IMR-90 (cell line): ENCODE measurements at regions of chr18 and their contacts with region 1.

Region 1: GRCh38 chr18:69935319-69936190 is 12.1 kb downstream of the CD226 start:
- DNase-seq: no peak
- ATAC-seq: no peak
- H3K4me3 ChIP-seq: no peak overlapping the region
- H3K27ac ChIP-seq: no peak overlapping the region
- H3K4me1 ChIP-seq: no peaks in the 10 kb centered on the region
- H3K27me3 ChIP-seq: no peaks in the 10 kb centered on the region
- CTCF ChIP-seq: no peak
- POLR2A ChIP-seq: no peak
- RAD21 ChIP-seq: no peak

Region 2: DNA sequence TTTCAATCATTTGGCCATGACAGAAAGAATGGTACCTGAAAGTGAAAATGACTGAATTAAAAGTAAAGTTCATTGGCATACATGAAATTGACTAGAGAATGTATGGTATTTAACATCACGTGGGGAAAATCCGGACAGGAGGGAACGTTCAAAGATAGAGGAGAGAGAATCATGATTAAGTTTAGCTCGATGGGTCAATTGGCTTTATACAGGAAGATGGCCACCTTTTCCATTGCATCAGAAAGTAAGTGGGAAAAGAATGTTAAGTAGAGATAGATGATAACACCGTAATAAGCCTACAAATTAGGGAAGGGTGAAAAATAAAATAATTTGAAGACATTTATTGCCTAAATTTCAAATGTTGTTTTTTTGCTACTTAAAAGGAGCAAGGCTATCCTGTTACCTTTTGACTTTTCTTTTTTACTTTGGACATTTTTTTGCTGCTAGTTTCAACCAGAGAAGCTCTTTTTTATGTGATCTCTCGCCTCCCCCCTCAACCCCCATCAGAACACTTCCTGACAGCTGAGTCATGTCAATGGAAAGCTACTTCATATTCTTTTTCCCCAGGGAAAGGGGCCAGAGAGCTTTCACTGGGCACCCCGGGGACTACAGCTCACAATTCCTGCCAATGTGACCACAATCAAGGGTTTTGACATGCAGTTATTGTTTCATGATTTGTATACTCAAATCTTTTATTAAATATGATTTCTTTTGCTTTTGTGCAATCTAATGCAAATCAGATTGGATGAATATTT is 1138.4 kb before region 1 on chr18:
- CTCF ChIA-PET with region 1: no interaction called
- POLR2A ChIA-PET with region 1: no interaction called
- dilution Hi-C with region 1: no loop called
- in situ Hi-C with region 1: no loop called
- intact Hi-C with region 1: no loop called
- DNase-seq: peak; percentile 83
- ATAC-seq: peak; percentile 33; the same call in 1 of the 2 replicates
- H3K4me3 ChIP-seq: no peak overlapping the region
- H3K27ac ChIP-seq: peak overlapping the region; percentile 67; the same call in 1 of the 2 replicates
- H3K4me1 ChIP-seq: peaks cover 2% of the 10 kb centered on the region; the same call in 1 of the 2 replicates
- H3K27me3 ChIP-seq: no peaks in the 10 kb centered on the region
- CTCF ChIP-seq: no peak
- POLR2A ChIP-seq: no peak
- RAD21 ChIP-seq: no peak

Region 3: GRCh38 chr18:69612242-69612641 is 323.3 kb before region 1 on chr18:
- CTCF ChIA-PET with region 1: no interaction called
- POLR2A ChIA-PET with region 1: no interaction called
- dilution Hi-C with region 1: no loop called
- in situ Hi-C with region 1: no loop called
- intact Hi-C with region 1: no loop called
- DNase-seq: no peak
- ATAC-seq: no peak
- H3K4me3 ChIP-seq: no peak overlapping the region
- H3K27ac ChIP-seq: no peak overlapping the region
- H3K4me1 ChIP-seq: no peaks in the 10 kb centered on the region
- H3K27me3 ChIP-seq: no peaks in the 10 kb centered on the region
- CTCF ChIP-seq: no peak
- POLR2A ChIP-seq: no peak
- RAD21 ChIP-seq: no peak

Region 4: DNA sequence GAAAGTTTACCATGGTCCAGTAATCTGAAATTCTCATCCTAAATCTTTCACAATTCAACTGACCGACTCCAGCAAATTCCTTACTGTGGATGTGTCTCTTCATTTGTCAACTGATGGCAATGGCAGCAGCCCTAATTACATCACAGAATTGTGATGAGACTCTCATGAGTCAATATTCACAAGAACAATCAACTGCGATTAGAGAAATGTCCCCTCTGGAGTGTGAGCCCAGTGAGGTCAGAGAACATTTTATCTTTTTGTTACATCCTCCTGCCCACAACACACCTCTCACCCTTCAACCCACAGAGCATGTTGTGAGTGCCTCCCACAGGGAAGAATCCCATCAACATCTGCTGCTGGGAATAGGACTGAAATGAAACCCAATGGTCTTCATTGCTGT is 61.5 kb before region 1 on chr18:
- CTCF ChIA-PET with region 1: no interaction called
- POLR2A ChIA-PET with region 1: no interaction called
- dilution Hi-C with region 1: no loop called
- in situ Hi-C with region 1: no loop called
- intact Hi-C with region 1: loop called (anchors 10 kb)
- DNase-seq: peak; percentile 65
- ATAC-seq: peak; percentile 54
- H3K4me3 ChIP-seq: no peak overlapping the region
- H3K27ac ChIP-seq: no peak overlapping the region
- H3K4me1 ChIP-seq: peaks cover 3% of the 10 kb centered on the region
- H3K27me3 ChIP-seq: no peaks in the 10 kb centered on the region
- CTCF ChIP-seq: no peak
- POLR2A ChIP-seq: no peak
- RAD21 ChIP-seq: no peak

Region 5: DNA sequence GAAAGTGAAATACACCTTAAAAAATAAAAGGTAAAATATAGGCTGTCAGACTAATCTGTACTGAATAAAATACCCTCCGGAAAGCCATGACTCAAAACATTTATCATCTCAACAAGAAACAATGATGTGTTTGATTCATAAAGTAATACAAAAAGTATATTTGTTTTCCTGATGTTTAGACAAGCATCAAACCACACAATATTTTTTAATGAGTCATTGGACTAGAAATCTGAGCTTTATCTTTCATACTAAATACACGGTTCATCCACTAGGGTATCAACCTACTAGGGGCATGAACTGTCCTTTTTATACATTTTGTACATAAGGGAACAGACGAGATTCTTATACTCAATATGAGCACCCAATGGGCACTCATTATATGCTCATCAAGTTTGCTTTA is 19.1 kb before region 1 on chr18:
- CTCF ChIA-PET with region 1: no interaction called
- POLR2A ChIA-PET with region 1: no interaction called
- dilution Hi-C with region 1: no loop called
- in situ Hi-C with region 1: no loop called
- intact Hi-C with region 1: no loop called
- DNase-seq: peak; percentile 26
- ATAC-seq: peak; percentile 61; the same call in 1 of the 2 replicates
- H3K4me3 ChIP-seq: no peak overlapping the region
- H3K27ac ChIP-seq: no peak overlapping the region
- H3K4me1 ChIP-seq: no peaks in the 10 kb centered on the region
- H3K27me3 ChIP-seq: no peaks in the 10 kb centered on the region
- CTCF ChIP-seq: 0 out of 2 replicates have a peak, but pooled peaks have one; percentile 13
- POLR2A ChIP-seq: no peak
- RAD21 ChIP-seq: no peak